Activated CD8-positive, alpha-beta T cell treated with anti-CD3 and anti-CD28 coated beads for 36 hours (primary cell): ENCODE measurements at regions of chr4 and their contacts with region 1.

Region 1: DNA sequence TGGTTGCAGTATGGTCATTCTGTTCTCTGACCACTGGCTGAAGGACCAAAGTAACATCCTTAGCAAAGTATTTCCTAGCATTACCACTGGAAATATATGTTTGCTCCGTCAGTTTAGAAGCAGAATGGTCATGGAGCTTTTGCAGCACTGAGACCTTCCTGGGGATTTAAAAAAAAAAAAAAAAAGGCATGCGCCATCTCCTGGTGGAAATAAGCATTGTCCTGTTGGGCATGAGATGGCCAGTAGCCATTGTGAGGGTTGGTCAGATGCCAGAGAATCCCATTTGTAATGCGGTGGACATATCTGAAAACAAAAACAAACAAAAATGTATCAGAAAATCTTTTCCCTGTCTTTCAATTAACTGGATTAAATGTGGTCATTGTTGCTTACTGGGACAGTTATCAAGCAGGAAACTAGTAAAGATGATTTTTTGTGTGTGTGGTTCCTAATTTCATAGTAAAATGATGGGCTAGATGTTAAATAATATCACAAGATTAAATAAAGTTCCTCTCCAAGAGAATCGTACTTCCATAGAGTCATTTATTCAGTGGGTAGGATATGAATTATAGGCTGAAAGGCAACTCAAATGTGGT is 139.6 kb downstream of the SOWAHB start:
- DNase-seq: no peak
- ATAC-seq: no peak
- H3K4me3 Mint-ChIP-seq: no peak overlapping the region
- H3K27ac Mint-ChIP-seq: no peak overlapping the region
- H3K4me1 Mint-ChIP-seq: peaks cover 9% of the 10 kb centered on the region
- H3K27me3 Mint-ChIP-seq: peaks cover 3% of the 10 kb centered on the region
- CTCF ChIP-seq: peak; percentile 78

Region 2: GRCh38 chr4:76233532-76233931 is 524.9 kb before region 1 on chr4:
- CTCF ChIA-PET with region 1: no interaction called
- POLR2A ChIA-PET with region 1: no interaction called
- intact Hi-C with region 1: no loop called
- DNase-seq: no peak
- ATAC-seq: no peak
- H3K4me3 Mint-ChIP-seq: no peak overlapping the region
- H3K27ac Mint-ChIP-seq: no peak overlapping the region
- H3K4me1 Mint-ChIP-seq: no peaks in the 10 kb centered on the region
- H3K27me3 Mint-ChIP-seq: no peaks in the 10 kb centered on the region
- CTCF ChIP-seq: no peak

Region 3: GRCh38 chr4:76611164-76611911 is 147.0 kb before region 1 on chr4:
- CTCF ChIA-PET with region 1: no interaction called
- POLR2A ChIA-PET with region 1: no interaction called
- intact Hi-C with region 1: no loop called
- DNase-seq: no peak
- ATAC-seq: no peak
- H3K4me3 Mint-ChIP-seq: no peak overlapping the region
- H3K27ac Mint-ChIP-seq: no peak overlapping the region
- H3K4me1 Mint-ChIP-seq: no peaks in the 10 kb centered on the region
- H3K27me3 Mint-ChIP-seq: peaks cover 9% of the 10 kb centered on the region
- CTCF ChIP-seq: no peak

Region 4: DNA sequence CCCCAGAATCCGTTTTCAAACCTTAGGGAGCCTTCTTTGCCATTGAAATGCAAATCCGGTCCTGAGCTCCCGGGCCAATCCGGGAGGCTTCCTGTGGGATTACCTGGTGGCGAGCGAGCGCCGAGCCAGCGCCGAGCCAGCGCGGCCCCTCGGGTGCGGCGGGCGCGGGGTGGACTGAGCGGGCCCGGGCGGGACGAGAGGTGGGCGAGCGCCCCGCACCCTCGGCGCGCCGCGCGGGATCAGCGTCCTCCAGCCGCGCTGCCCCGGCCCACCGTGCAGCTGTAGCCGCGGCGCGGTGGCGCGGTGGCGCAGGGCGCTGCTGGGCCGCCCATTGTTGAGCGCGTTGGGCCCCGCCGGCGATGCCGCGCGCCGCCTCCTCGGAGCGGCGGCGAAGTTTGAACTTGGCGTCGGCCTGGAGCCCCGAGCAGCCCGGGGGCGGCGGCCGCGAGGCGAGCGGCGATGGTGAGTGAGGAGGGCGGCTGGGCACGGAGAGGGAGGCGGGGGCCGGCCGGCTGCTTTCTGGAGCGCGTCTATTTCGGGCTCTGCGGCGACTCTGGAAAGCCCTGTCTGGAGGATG is 69.1 kb before region 1 on chr4:
- CTCF ChIA-PET with region 1: no interaction called
- POLR2A ChIA-PET with region 1: no interaction called
- intact Hi-C with region 1: no loop called
- DNase-seq: peak; percentile 27
- ATAC-seq: peak; percentile 60
- H3K4me3 Mint-ChIP-seq: peak overlapping the region; percentile 49
- H3K27ac Mint-ChIP-seq: no peak overlapping the region
- H3K4me1 Mint-ChIP-seq: peaks cover 9% of the 10 kb centered on the region
- H3K27me3 Mint-ChIP-seq: peaks cover 66% of the 10 kb centered on the region
- CTCF ChIP-seq: no peak

Region 5: DNA sequence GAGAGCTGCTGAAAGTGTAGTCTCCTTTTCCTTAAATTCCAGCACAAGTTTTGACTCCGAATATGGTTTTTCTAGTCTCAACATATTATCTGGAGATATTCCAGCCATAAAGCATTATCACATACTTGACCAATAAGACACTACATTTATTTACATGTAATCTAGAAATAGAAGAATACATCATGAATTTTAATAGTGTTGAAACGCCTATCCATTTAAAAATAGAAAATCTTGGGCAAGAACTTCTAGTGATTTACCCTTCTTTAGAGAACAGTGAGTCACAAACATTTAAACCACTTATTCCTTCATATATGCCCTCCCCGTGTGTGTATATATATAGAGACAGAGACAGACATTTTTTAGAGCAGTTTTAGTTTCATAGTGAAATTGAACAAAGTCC is 22.0 kb before region 1 on chr4:
- CTCF ChIA-PET with region 1: interaction called, 3 read pairs
- POLR2A ChIA-PET with region 1: no interaction called
- intact Hi-C with region 1: loop called (anchors 2 kb)
- DNase-seq: no peak
- ATAC-seq: no peak
- H3K4me3 Mint-ChIP-seq: no peak overlapping the region
- H3K27ac Mint-ChIP-seq: no peak overlapping the region
- H3K4me1 Mint-ChIP-seq: peaks cover 8% of the 10 kb centered on the region
- H3K27me3 Mint-ChIP-seq: peaks cover 4% of the 10 kb centered on the region
- CTCF ChIP-seq: no peak

Region 6: GRCh38 chr4:76850010-76850441 is 91.6 kb after region 1 on chr4:
- CTCF ChIA-PET with region 1: no interaction called
- POLR2A ChIA-PET with region 1: no interaction called
- intact Hi-C with region 1: no loop called
- DNase-seq: no peak
- ATAC-seq: no peak
- H3K4me3 Mint-ChIP-seq: no peak overlapping the region
- H3K27ac Mint-ChIP-seq: no peak overlapping the region
- H3K4me1 Mint-ChIP-seq: no peaks in the 10 kb centered on the region
- H3K27me3 Mint-ChIP-seq: peaks cover 2% of the 10 kb centered on the region
- CTCF ChIP-seq: no peak